Activated B cell treated with CpG ODN at 0.5 μM for 24 hours (primary cell): ENCODE measurements at regions of chr15 and their contacts with region 1.

Region 1: GRCh38 chr15:57720867-57721266 is 14.4 kb downstream of the POLR2M start:
- DNase-seq: no peak
- ATAC-seq: no peak
- H3K4me3 Mint-ChIP-seq: no peak overlapping the region
- H3K27ac Mint-ChIP-seq: no peak overlapping the region
- H3K4me1 Mint-ChIP-seq: no peaks in the 10 kb centered on the region
- H3K27me3 Mint-ChIP-seq: no peaks in the 10 kb centered on the region
- CTCF ChIP-seq: no peak

Region 2: DNA sequence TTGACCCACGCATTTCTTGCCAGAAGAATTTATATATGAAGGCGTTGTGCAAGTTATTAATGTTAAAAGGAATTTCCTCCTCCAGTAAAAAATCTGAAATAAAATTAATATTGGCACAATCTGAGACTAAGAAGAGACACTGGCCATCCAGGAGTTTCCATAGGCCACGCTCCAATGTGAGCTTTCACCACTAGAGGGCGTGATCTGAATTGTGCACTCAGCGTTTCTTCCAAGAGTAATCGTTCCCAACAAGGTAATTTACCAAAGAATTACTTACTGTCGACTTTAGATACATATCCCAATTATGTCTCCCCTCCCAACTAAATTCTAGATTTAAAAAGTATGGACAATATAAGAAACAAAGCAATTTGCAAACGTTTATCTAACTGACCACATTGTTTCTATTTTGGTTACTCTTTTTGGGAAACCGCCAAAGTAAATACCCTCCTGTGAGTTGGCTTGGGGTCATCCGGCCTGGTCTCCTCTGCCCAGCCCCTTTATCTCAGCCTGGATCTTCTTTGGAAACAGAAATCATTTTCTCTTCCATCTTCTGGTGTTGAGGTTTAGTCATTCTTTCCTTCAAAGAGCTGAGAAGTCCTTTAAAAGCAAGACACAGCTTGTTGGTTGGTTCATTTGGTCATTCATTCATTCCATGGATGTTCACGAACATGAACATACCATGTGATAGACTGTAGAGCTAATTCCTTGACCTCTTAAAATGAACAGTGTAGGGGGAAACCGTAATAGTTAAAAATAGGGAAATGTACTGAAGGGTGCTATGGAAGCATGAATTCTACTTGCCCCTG is 11.9 kb after region 1 on chr15:
- CTCF ChIA-PET with region 1: interaction called, 10 read pairs
- POLR2A ChIA-PET with region 1: no interaction called
- intact Hi-C with region 1: no loop called
- DNase-seq: no peak
- ATAC-seq: peak; percentile 49
- H3K4me3 Mint-ChIP-seq: no peak overlapping the region
- H3K27ac Mint-ChIP-seq: no peak overlapping the region
- H3K4me1 Mint-ChIP-seq: no peaks in the 10 kb centered on the region
- H3K27me3 Mint-ChIP-seq: no peaks in the 10 kb centered on the region
- CTCF ChIP-seq: no peak